MCF 10A (cell line): ENCODE measurements at regions of chr7 and their contacts with region 1.

Region 1: DNA sequence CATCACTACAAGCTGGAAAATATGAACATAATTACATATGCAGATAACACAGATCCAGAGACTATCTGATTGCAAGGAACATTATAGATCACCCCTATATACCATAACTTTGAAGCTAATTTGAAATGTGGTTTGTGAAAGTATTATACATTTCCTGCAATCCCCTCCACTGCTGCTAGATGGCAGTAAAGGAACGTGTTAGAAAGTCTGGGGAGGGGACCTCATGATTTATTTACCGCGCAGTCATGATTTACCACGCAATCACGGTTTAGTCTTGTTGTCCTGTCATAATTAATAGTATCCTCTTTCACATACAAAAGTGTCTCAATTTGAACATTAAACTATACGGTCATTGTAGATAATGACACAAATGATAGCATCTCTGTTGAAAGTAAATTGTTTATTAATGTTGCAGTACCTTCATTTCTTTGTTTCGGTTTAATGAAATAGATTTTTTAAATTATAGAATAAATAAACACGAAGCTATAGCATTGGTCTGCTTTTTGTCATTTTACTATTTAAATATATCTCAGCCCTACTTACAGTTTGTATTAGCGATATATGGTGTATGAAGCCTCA is 145.3 kb upstream of the PRSS1 start:
- DNase-seq: peak; percentile 71
- H3K4me3 Mint-ChIP-seq: peak overlapping the region; percentile 8
- H3K27ac Mint-ChIP-seq: no peak overlapping the region
- H3K4me1 Mint-ChIP-seq: peaks cover 14% of the 10 kb centered on the region
- H3K27me3 Mint-ChIP-seq: no peaks in the 10 kb centered on the region
- CTCF ChIP-seq: peak; percentile 83

Region 2: DNA sequence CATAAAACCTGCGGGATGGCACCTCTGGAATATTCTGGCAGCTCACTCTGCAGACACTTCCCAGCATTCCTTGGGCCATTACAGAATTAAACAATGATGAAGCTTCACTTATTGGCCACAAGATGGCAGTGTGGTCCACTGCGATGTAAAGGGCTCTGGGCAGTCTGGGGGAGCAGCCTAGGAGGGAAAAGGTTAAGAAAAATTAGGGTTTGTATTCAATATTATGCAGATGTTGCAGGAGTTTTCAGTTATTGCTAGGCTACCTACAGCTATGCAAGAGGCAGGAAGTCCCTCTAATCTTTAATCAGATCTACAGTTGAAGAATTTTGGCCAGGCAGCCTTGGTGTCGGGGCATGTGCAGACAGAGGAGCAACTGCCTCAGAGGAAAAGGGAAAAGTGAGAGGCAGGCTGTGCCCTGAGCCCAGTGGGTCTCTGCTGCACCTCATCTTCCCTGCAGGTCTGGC is 87.9 kb before region 1 on chr7:
- CTCF ChIA-PET with region 1: interaction called, 12 read pairs
- POLR2A ChIA-PET with region 1: no interaction called
- intact Hi-C with region 1: no loop called
- DNase-seq: peak; percentile 81
- H3K4me3 Mint-ChIP-seq: no peak overlapping the region
- H3K27ac Mint-ChIP-seq: no peak overlapping the region
- H3K4me1 Mint-ChIP-seq: peaks cover 20% of the 10 kb centered on the region
- H3K27me3 Mint-ChIP-seq: no peaks in the 10 kb centered on the region
- CTCF ChIP-seq: peak; percentile 80

Region 3: DNA sequence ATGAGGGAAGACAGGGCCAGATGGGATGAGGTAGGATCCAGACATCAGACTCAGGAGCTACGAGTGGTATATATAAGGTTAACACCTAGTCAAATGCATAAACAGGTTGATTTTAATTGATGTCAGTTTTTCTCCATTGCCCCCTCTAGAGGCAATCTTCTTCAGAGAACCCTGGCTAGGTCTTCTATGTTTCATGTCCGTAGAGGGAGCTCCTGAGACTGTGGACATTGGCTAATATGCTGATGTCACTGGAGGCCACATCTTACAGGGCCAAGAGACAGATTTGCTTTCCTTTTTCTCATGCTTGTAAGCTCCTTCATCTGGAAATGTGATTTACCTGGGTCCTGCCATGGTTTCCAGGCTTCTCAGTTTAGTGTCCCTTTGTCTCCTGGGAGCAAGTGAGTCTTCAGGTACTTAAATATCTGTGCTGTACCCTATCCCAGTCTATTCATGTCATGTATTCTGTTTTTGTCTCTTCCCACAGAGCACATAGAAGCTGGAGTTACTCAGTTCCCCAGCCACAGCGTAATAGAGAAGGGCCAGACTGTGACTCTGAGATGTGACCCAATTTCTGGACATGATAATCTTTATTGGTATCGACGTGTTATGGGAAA is 16.3 kb before region 1 on chr7:
- CTCF ChIA-PET with region 1: interaction called, 92 read pairs
- POLR2A ChIA-PET with region 1: interaction called, 6 read pairs
- intact Hi-C with region 1: no loop called
- DNase-seq: peak; percentile 85
- H3K4me3 Mint-ChIP-seq: no peak overlapping the region
- H3K27ac Mint-ChIP-seq: no peak overlapping the region
- H3K4me1 Mint-ChIP-seq: peaks cover 6% of the 10 kb centered on the region
- H3K27me3 Mint-ChIP-seq: no peaks in the 10 kb centered on the region
- CTCF ChIP-seq: peak; percentile 63

Region 4: DNA sequence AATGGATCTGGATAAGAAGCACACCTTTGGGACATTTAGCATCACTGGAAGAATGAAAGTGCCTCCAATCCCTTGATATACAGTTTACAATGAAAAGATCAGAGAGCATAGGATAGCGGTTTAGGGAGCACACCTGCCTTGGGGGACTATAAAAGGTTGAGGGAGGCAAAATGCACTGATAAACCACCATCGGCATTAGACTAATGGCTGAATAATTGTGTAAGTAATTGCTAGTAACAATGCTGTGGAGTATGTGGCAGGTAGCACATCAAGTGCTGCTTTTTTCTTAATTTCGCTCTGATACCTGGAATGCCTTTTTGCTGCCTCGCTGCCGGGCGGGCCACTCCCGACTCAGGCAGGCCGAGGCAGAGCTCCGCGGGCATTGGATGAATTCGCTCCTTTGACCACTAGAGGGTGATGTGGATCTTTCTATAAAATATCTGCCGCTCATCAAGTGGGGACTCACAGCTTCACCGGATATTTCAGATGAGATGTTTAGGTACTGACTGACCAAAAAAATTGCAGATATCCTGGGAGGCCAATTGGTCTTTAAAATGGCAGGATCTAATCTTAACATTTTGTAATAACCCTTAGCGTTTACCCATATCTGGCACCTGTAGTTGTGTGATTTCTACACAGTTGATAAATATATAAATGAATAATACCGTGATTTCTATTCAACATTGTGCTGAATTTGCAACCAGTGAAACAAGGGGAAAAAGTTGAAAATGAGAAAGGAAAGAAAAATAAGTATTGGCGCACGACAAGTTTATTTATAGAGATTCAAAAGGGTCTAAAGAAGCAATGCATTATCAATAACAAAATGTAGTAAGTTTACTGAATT is 28.6 kb after region 1 on chr7:
- CTCF ChIA-PET with region 1: interaction called, 36 read pairs
- POLR2A ChIA-PET with region 1: no interaction called
- intact Hi-C with region 1: loop called (anchors 1 kb)
- DNase-seq: peak; percentile 75
- H3K4me3 Mint-ChIP-seq: no peak overlapping the region
- H3K27ac Mint-ChIP-seq: no peak overlapping the region
- H3K4me1 Mint-ChIP-seq: peaks cover 11% of the 10 kb centered on the region
- H3K27me3 Mint-ChIP-seq: peaks cover 14% of the 10 kb centered on the region
- CTCF ChIP-seq: peak; percentile 61

Region 5: GRCh38 chr7:142788303-142789289 is 184.6 kb after region 1 on chr7:
- CTCF ChIA-PET with region 1: interaction called, 47 read pairs
- POLR2A ChIA-PET with region 1: interaction called, 3 read pairs
- intact Hi-C with region 1: loop called (anchors 1 kb)
- DNase-seq: no peak
- H3K4me3 Mint-ChIP-seq: no peak overlapping the region
- H3K27ac Mint-ChIP-seq: no peak overlapping the region
- H3K4me1 Mint-ChIP-seq: peaks cover 5% of the 10 kb centered on the region
- H3K27me3 Mint-ChIP-seq: peaks cover 31% of the 10 kb centered on the region
- CTCF ChIP-seq: no peak

Region 6: GRCh38 chr7:142811154-142811737 is 207.3 kb after region 1 on chr7:
- CTCF ChIA-PET with region 1: interaction called, 25 read pairs
- POLR2A ChIA-PET with region 1: no interaction called
- intact Hi-C with region 1: loop called (anchors 1 kb)
- DNase-seq: peak; percentile 58
- H3K4me3 Mint-ChIP-seq: no peak overlapping the region
- H3K27ac Mint-ChIP-seq: no peak overlapping the region
- H3K4me1 Mint-ChIP-seq: no peaks in the 10 kb centered on the region
- H3K27me3 Mint-ChIP-seq: peaks cover 79% of the 10 kb centered on the region
- CTCF ChIP-seq: peak; percentile 63

Region 7: DNA sequence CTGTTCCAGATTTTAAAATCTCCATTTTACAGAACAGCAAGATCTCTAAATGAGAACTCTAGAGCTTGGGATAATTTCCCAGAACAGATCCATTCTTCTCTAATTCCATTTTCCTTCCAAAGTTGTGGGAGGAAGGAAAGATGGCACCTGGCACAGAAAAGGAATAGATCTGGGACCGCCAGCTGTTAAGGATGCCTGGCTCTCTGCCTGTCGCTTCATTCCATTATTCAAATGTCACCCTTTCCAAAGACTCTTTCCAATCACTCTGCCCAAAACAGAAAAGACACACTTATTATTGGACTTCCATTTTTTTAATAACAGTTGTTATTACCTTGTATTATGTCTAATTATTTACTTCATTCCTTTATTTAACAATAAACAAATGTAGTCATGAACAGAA is 423.7 kb after region 1 on chr7:
- CTCF ChIA-PET with region 1: no interaction called
- POLR2A ChIA-PET with region 1: no interaction called
- intact Hi-C with region 1: no loop called
- DNase-seq: no peak
- H3K4me3 Mint-ChIP-seq: no peak overlapping the region
- H3K27ac Mint-ChIP-seq: no peak overlapping the region
- H3K4me1 Mint-ChIP-seq: no peaks in the 10 kb centered on the region
- H3K27me3 Mint-ChIP-seq: peaks cover 34% of the 10 kb centered on the region
- CTCF ChIP-seq: no peak